ENCODE measurements at regions of chr5 and their contacts with region 1.

Region 1: DNA sequence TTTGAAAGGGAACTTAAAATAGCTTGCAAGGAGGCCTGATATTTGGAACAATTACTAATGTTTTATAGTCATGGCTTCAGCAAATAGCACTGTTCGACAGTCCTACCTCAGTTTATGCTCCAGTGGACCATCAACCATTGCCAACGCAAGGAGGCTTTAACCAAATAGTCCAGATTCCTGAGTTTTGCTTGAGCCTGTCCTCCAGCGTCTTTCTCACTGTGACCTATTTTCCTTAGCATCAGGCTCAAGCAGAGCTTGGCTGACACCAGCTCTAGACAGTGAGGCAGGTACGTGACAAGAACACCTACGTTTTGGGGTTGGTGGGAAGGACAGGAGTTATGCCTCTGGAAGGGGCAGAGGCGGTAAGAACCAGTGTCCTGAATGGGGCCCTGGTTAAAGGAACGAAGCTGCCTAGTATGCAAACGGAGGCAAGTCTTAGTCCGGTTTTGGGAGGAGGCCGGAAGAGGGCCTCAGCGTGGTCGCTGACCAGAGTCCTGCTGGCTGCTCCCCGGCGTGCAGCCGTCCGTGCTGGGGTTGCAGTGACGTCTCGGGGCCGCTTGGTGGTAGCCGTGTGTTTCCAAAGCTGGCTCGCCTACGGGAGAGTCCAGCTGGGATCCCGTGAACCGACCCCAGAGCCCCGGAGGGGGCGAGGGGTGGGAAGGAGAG is 998 bp upstream of the FGF18 start:
- DNase-seq: peak; percentile 72 to 89
- H3K4me3 ChIP-seq: peak overlapping the region; percentile 41 to 43
- H3K27ac ChIP-seq: no peak overlapping the region
- H3K4me1 ChIP-seq: peaks cover 0 to 36% (median 23%) of the 10 kb centered on the region in 4 donors
- H3K27me3 ChIP-seq: no peaks in the 10 kb centered on the region
- CTCF ChIP-seq: peak; percentile 98

Region 2: DNA sequence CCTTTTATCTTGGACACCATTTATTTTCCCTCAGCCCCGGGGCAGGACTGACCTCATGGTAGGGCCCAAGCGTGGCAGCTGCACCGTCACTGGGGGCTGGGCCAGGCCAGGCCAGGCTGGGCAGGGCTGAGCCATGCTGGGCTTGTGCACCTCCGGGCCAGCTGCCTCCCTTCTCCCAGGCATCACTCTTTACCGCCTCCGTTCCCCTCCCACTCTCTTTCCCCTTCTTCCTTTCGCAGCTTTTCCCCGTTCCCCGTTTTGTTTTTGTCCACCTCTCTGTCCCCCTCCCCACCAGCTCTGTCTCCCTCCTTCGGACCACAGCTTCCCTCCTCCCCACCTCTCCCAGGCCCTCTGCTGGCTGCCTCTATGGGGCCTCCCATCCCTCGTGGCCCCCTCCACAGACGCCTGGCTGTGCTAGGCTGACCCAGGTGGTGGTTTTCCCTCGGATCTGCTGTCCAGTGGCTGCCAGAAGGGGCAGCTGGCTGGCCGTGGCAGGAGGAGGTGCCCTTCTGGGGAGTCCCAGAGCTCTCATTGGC is 18.9 kb after region 1 on chr5:
- intact Hi-C with region 1: no loop called
- DNase-seq: no peak
- H3K4me3 ChIP-seq: no peak overlapping the region
- H3K27ac ChIP-seq: no peak overlapping the region
- H3K4me1 ChIP-seq: no peaks in the 10 kb centered on the region
- H3K27me3 ChIP-seq: no peaks in the 10 kb centered on the region
- CTCF ChIP-seq: no peak

Region 3: GRCh38 chr5:171450423-171451331 is 32.2 kb after region 1 on chr5:
- intact Hi-C with region 1: no loop called
- DNase-seq: peak; percentile 54 to 80
- H3K4me3 ChIP-seq: peak overlapping the region; percentile 43 to 46
- H3K27ac ChIP-seq: peak overlapping the region; percentile 72 to 75
- H3K4me1 ChIP-seq: peaks cover 0 to 6% (median 3%) of the 10 kb centered on the region in 4 donors
- H3K27me3 ChIP-seq: no peaks in the 10 kb centered on the region
- CTCF ChIP-seq: no peak

Region 4: GRCh38 chr5:171595801-171596231 is 177.4 kb after region 1 on chr5:
- intact Hi-C with region 1: loop called (anchors 5 kb)
- DNase-seq: peak in 1 of 2 donors; percentile 54
- H3K4me3 ChIP-seq: no peak overlapping the region
- H3K27ac ChIP-seq: peak overlapping the region; percentile 51
- H3K4me1 ChIP-seq: peaks cover 0 to 20% (median 17%) of the 10 kb centered on the region in 4 donors
- H3K27me3 ChIP-seq: no peaks in the 10 kb centered on the region
- CTCF ChIP-seq: no peak

Region 5: DNA sequence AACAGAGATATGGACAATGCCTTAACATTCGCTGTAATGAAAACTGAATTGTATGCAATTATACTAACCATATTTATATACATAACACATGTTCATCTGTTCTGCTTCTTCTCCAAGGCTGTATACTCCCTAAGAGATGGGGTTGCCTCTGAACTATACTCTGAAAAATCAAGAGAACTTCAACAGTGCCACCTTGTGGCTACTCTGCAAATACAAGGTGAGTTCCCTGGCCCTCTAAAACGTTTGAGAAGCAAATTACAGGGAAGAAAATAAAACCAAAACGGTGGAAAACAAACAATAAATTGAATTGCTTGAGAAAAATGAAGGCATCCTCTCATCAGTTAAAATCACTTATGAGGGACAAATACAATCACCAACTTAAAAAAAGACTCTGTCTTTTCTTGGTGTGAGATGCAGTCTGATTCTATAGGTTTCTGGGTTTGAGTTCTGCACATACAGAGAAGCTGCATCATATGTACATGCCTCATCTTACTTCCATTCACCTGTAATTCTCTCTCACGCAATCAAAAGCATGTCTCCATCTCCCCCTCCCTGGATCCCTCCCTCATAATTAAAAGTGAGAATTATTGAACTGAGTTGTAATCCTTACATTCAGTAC is 489.4 kb after region 1 on chr5:
- intact Hi-C with region 1: loop called (anchors 2 kb)
- DNase-seq: peak in 1 of 2 donors; percentile 32
- H3K4me3 ChIP-seq: no peak overlapping the region
- H3K27ac ChIP-seq: no peak overlapping the region
- H3K4me1 ChIP-seq: peaks cover 0 to 25% (median 5%) of the 10 kb centered on the region in 4 donors
- H3K27me3 ChIP-seq: no peaks in the 10 kb centered on the region
- CTCF ChIP-seq: peak; percentile 78 to 80

Region 6: DNA sequence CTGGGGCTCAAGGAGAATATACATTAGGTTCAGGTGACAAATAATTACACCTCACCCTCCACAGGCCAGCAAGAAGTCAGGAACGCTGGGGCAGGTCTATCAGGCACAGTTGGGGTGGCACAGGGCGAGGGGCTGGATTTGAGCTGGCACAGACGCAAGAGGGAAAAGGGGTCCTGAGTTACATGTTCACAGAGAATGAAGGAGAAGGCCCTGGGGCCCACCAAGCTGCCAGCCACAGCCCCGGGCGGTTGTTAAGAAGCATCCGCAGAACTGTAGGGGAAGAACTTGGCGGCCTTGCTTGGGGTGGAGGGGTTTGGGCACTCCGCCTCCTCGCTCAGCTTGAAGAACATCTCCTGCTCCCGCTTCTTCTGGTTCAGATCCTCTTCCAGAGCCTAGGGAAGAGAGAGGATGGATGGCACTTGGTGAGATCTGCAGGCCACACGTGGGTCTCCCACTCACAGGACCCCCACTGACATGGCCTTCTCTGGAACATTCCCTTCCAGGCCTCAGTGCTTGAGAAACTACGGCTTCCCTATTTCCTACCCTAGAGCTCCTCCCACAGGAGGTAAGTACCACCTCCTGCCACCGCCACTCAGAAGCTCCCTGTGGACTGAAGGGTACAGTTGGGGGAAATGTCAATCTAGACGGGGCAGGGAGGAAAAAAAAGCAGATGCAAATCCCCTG is 626.3 kb after region 1 on chr5:
- intact Hi-C with region 1: loop called (anchors 10 kb)
- DNase-seq: no peak
- H3K4me3 ChIP-seq: no peak overlapping the region
- H3K27ac ChIP-seq: no peak overlapping the region
- H3K4me1 ChIP-seq: no peaks in the 10 kb centered on the region
- H3K27me3 ChIP-seq: no peaks in the 10 kb centered on the region
- CTCF ChIP-seq: no peak

Measured in tibial artery (tissue), 4 donors.